GM10248 (cell line): ENCODE measurements at regions of chr12 and their contacts with region 1.

Region 1: GRCh38 chr12:106841510-106842302 is 67.2 kb downstream of the RIC8B start:
- DNase-seq: peak; percentile 50
- CTCF ChIP-seq: peak; percentile 64

Region 2: DNA sequence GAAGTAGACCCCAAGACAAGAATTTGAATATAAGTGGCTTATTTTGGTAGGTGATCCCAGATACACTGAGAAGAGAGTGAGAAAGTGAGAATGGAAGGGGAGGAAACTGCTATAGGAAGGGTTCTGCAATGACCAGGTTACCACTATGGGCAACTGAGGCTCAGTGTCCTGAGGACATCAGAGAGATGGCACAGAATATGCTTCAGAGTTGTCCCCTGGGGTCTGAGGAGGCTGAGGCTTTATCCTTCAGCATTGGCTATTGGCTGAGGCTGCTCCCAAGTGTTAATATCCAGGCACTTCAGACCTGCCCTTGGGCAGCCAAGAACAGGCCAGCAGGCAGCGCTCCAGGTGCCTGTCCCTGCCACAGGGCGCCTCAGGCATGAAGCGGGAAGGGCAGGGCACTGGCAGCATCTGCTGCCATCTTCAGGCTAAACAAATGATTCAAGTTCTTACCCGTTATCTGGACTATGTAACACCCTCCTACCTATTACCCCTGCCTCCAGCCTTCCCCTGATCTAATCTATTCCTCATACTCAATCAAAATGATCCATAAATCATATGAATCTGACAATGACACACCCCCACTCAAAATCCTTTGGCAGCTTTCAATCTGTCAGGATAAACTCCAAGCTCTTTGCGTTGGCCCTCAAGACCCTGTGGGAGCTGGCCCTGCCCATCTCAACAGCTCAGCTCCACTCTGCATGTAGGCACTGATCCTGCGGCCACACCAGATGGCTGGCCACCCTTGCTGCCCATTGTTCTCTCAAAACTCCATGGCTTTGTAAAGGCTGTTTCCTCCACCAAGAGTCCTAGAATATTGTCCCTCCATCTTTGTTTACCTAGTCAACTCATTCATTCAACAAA is 636.3 kb before region 1 on chr12:
- CTCF ChIA-PET with region 1: no interaction called
- POLR2A ChIA-PET with region 1: no interaction called
- DNase-seq: no peak
- CTCF ChIP-seq: no peak

Region 3: DNA sequence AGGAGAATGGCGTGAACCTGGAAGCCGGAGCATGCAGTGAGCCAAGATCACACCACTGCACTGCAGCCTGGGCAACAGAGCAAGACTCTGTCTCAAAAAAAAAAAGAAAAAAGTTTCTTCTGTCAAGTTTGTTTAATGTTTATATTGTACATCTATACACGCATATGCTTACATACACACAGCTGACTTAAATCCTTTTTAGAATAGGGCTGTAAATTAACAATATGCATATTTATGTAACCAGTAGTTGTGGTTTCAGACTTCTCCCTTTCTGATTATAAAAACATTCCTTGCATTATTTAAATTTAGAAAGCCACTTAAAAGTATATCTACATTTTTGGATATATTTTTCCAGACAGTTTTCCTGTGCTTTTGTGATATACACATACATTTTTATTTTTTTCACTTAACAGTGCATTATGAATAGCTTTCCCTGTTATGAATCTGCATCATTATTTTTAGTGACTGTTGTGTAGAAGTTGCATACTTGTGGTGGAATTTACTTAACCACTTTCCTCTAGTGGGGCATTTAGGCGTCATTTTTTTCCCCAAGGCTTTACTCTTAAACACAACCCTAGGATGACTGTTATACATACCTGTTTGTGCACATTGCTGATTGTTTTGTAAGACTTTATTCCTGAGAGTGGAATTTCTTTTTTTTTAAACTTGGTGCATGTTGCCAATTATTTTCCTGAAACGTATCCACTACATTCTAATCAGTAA is 454.7 kb before region 1 on chr12:
- CTCF ChIA-PET with region 1: interaction called, 19 read pairs
- POLR2A ChIA-PET with region 1: no interaction called
- DNase-seq: no peak
- CTCF ChIP-seq: no peak

Region 4: DNA sequence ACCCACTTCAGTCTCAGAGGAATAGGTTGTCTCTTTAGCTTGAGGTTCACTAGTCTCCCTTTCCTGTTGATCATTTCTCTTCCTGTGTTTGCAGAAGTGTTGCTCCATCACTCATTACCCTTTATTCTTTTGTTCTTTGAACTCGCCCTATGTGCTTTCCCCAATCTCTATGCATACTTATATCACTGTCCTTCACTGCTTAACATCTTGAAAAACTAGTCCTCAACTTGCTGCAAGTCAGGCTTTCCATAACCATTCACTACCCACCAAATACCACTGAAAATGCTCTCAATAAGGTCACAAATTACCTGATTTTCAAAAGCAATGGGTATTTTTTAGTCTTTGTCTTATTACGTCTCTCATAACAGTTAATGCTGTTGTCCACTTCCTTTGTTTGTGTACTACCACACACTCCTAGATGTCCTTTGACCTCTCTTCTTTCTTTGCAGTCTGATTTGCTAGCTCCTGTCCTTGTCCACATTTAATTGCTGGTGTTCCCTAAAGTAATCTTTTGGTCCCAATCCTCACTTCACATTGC is 13.6 kb after region 1 on chr12:
- CTCF ChIA-PET with region 1: interaction called, 15 read pairs
- POLR2A ChIA-PET with region 1: no interaction called
- DNase-seq: no peak
- CTCF ChIP-seq: no peak

Region 5: DNA sequence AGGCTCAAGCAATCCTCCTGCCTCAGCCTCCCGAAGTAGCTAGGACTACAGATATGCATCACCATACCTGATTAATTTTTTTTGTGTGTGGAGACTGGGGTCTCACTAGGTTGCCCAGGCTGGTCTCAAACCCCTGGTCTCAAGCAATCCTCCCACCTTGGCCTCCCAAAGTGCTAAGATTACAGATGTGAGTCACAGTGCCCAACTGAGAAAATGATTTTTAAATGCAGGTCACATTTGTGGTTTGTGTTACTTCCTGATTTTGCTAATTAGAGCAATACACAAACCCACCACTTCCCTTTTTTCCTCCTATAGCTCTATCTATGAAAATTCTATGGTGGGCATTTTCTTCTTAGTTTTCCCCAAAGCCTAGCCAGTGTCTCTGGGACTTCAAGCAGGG is 68.5 kb after region 1 on chr12:
- CTCF ChIA-PET with region 1: no interaction called
- POLR2A ChIA-PET with region 1: no interaction called
- DNase-seq: peak; percentile 50
- CTCF ChIP-seq: no peak